ENCODE measurements at regions of chr19 and their contacts with region 1.

Region 1: GRCh38 chr19:2820112-2820702 is 539 bp downstream of the ZNF554 start:
- DNase-seq: peak in 1 of 9 experiments; percentile 16
- ATAC-seq: peak; percentile 9
- H3K4me3 ChIP-seq: peak overlapping the region; percentile 50 to 72
- H3K4me3 Mint-ChIP-seq: peak overlapping the region; percentile 86
- H3K27ac ChIP-seq: peak overlapping the region in 1 of 2 experiments; percentile 33
- H3K27ac Mint-ChIP-seq: peak overlapping the region; percentile 22
- H3K4me1 ChIP-seq: peaks cover 8% of the 10 kb centered on the region
- H3K4me1 Mint-ChIP-seq: peaks cover 10% of the 10 kb centered on the region
- H3K27me3 ChIP-seq: no peaks in the 10 kb centered on the region
- H3K27me3 Mint-ChIP-seq: no peaks in the 10 kb centered on the region
- CTCF ChIP-seq: no peak

Region 2: DNA sequence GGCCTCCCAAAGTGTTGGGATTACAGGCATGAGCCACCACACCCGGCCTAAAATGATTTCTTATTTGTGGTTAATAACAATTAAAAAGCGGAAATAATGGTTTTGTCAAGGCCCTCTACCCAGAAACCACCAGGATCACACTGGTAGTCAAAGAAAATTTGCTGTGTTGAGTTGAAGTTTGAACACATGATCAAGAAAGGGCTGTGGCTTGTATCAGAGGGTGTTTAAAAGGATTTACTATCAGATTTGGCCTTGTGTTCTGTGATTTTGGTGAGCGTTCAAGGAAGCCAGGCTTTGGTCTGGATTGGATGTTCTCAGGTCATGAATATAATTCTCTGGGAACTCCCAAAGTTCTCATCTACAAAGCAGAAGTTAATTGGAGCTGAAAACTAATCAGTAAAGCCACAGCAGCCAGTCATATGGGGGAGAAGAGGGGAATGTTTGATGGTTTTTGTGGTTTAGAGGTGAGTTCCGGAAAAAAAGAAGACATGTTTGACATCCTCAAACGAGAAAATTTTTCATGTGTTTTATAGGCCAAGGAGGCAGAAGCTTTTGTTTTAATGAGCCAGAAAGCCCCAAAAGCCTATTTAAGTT is 36.3 kb after region 1 on chr19:
- CTCF ChIA-PET with region 1: no interaction called
- POLR2A ChIA-PET with region 1: no interaction called
- intact Hi-C with region 1: loop called in 1 of 2 experiments (anchors 1 kb)
- DNase-seq: peak in 2 of 9 experiments; percentile 64 to 78
- ATAC-seq: peak; percentile 80
- H3K4me3 ChIP-seq: no peak overlapping the region
- H3K4me3 Mint-ChIP-seq: peak overlapping the region; percentile 42
- H3K27ac ChIP-seq: peak overlapping the region in 1 of 2 experiments; percentile 17
- H3K27ac Mint-ChIP-seq: peak overlapping the region; percentile 78
- H3K4me1 ChIP-seq: peaks cover 34% of the 10 kb centered on the region
- H3K4me1 Mint-ChIP-seq: peaks cover 27% of the 10 kb centered on the region
- H3K27me3 ChIP-seq: no peaks in the 10 kb centered on the region
- H3K27me3 Mint-ChIP-seq: no peaks in the 10 kb centered on the region
- CTCF ChIP-seq: no peak

Region 3: DNA sequence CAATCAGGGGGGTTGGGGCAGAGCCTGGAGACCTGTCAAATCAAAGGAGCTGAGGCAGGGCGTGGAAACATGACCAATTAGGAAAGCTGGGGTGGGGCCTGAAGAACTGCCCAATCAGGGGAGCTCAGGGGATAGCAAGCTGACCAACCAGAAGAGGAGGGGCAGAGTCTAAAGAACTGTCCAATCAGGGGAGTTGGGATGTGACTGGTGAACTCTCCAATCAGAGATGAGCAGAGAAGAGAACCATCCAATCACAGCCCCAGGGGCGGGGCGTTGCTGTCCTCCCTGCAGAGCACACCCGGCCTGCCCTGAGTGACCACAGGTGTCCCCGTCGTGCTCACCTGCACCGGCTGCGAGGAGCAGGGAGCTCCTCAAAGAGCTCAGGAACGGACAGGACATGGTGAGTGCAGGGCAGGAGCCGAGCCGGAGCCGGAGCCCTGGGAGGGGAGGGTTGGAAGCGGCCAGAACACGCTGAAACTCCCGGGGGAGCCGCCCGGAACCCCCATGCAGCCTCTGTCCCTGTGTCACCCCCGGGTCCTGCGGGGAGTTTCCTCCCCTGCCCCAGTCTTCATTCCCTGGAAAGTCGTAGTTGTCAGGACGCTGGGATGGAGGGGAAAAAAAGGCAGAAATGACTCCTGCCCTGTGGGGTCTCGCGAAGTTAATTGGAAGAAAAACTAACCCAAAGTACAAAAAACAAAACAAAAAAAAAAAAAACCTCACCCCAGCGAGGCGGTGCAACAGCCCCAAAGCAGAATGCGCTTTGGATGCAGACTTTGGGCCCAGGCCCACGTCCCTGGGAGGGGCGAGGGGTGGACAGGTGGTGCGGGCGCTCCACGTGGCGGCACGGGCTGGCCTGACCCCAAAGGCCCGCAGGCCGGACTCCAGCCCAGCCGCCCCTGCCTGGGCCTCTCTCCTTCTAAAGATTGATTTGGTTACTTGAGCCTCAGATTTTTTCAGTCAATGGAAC is 47.1 kb after region 1 on chr19 and contains the start of gene ZNF556:
- CTCF ChIA-PET with region 1: interaction called, 3 read pairs
- POLR2A ChIA-PET with region 1: interaction called, 3 read pairs
- intact Hi-C with region 1: loop called in 1 of 2 experiments (anchors 1 kb)
- DNase-seq: peak in 1 of 9 experiments; percentile 13
- ATAC-seq: no peak
- H3K4me3 ChIP-seq: no peak within 1 kb of the TSS
- H3K4me3 Mint-ChIP-seq: no peak within 1 kb of the TSS
- H3K27ac ChIP-seq: no peak within 1 kb of the TSS
- H3K27ac Mint-ChIP-seq: no peak within 1 kb of the TSS
- H3K4me1 ChIP-seq: no peaks in the 10 kb centered on the region
- H3K4me1 Mint-ChIP-seq: peaks cover 8% of the 10 kb centered on the region
- H3K27me3 ChIP-seq: peaks cover 0 to 2% of the 10 kb centered on the region in 2 experiments
- H3K27me3 Mint-ChIP-seq: peaks cover 10% of the 10 kb centered on the region
- CTCF ChIP-seq: no peak
- total RNA-seq, gene ZNF556: not detected

Measured in CD8-positive, alpha-beta T cell (primary cell).